ENCODE measurements at regions of chr16 and their contacts with region 1.

Region 1: GRCh38 chr16:31002250-31002700 is 8.2 kb downstream of the STX1B start:
- DNase-seq: peak; percentile 20
- H3K4me3 ChIP-seq: peak overlapping the region in 1 of 3 experiments; percentile 8
- H3K27ac ChIP-seq: no peak overlapping the region
- H3K4me1 ChIP-seq: peaks cover 30% of the 10 kb centered on the region
- H3K27me3 ChIP-seq: no peaks in the 10 kb centered on the region
- CTCF ChIP-seq: no peak

Region 2: DNA sequence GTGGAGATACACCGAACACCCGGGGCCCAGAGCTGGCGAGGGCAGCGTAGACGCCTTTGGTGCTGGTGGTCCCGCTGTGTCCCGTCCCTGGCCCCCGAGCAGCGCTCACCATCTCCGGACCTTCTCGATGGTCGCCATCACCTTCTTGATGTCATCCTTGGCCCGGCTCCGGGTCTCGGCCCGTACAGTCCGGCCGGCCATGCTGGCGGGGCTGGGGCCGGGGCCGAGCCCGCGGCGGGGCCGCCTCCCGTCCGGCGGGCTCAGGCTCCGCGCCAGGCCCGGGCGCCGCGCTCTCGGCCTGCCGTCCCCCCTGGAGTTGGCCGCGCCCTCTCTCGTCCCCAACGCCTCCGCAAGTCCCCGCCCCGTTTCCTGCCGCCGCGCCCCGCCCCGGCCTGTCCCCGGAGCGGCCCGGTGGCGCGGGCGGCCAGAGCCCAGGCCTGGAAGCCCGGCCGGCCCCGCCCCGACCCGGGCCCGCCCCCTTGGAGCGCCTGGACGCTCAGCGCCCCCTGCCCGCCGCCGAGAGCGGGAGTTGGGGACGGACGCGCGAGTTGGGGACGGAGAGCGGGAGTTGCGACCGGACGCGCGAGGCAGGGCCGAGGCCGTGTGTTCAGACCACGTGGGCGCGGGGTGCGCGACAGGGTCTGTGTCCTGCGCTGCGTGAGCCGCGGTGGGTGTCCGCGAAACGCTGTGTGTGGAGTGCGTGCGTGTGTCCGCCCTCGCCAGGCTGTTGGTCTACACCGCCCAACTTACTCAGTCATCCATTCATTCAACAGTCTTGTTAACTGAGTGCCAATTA is 108.3 kb before region 1 on chr16 and contains the start of gene BCL7C:
- CTCF ChIA-PET with region 1: no interaction called
- dilution Hi-C with region 1: no loop called
- in situ Hi-C with region 1: no loop called
- intact Hi-C with region 1: no loop called
- DNase-seq: peak; percentile 87
- H3K4me3 ChIP-seq: peak within 1 kb of the TSS; percentile 54 to 86 (median 81)
- H3K27ac ChIP-seq: peak within 1 kb of the TSS; percentile 33
- H3K4me1 ChIP-seq: peaks cover 38% of the 10 kb centered on the region
- H3K27me3 ChIP-seq: no peaks in the 10 kb centered on the region
- CTCF ChIP-seq: peak; percentile 4 to 54
- total RNA-seq, gene BCL7C: 26.1 to 28.5 TPM

Region 3: GRCh38 chr16:30964574-30965226 is 37.6 kb before region 1 on chr16:
- CTCF ChIA-PET with region 1: no interaction called
- dilution Hi-C with region 1: loop called (anchors 5 kb)
- in situ Hi-C with region 1: no loop called
- intact Hi-C with region 1: no loop called
- DNase-seq: no peak
- H3K4me3 ChIP-seq: no peak overlapping the region
- H3K27ac ChIP-seq: no peak overlapping the region
- H3K4me1 ChIP-seq: no peaks in the 10 kb centered on the region
- H3K27me3 ChIP-seq: no peaks in the 10 kb centered on the region
- CTCF ChIP-seq: no peak

Measured in mammary epithelial cell (primary cell).